Activated CD4-positive, alpha-beta T cell treated with anti-CD3 and anti-CD28 coated beads for 36 hours (primary cell): ENCODE measurements at regions of chr5 and their contacts with region 1.

Region 1: DNA sequence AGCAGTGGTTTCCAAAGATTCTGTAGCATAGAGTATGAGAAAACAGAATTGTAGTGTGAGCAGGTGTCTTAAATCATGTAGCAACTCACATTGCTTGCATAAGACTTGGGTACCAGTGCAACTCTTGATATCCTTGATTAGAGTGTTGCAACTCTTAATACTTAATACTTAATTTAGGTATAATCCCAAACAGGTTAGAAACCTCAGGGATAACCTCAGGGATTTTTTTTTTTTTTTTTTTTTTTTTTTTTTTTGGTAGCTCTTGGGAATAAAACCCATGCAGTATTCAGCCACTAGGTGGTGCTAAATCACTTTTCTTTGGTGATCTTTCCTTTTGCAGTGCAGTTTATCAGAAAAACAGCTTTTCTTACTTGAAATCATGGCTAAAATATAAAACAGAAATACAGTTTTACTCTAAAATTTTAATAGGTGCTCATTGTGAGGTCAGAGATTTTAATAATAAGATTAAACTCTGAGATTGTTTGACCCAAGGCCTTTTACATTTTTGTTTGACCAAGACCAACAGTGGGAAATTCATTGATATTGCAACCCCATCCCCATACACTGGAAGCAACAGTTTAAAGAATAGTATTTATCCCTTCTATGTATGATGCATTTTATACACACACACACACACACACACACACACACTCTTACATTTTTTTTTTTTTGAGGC is 55.3 kb downstream of the ERAP1 start:
- DNase-seq: peak; percentile 36
- ATAC-seq: no peak
- H3K4me3 Mint-ChIP-seq: no peak overlapping the region
- H3K27ac Mint-ChIP-seq: no peak overlapping the region
- H3K4me1 Mint-ChIP-seq: peaks cover 18% of the 10 kb centered on the region
- H3K27me3 Mint-ChIP-seq: no peaks in the 10 kb centered on the region

Region 2: GRCh38 chr5:96344678-96345577 is 407.6 kb before region 1 on chr5:
- CTCF ChIA-PET with region 1: no interaction called
- POLR2A ChIA-PET with region 1: no interaction called
- intact Hi-C with region 1: loop called in 1 of 2 experiments (anchors 10 kb)
- DNase-seq: peak; percentile 12
- ATAC-seq: peak; percentile 89
- H3K4me3 Mint-ChIP-seq: peak overlapping the region; percentile 15
- H3K27ac Mint-ChIP-seq: no peak overlapping the region
- H3K4me1 Mint-ChIP-seq: peaks cover 28% of the 10 kb centered on the region
- H3K27me3 Mint-ChIP-seq: peaks cover 10% of the 10 kb centered on the region

Region 3: DNA sequence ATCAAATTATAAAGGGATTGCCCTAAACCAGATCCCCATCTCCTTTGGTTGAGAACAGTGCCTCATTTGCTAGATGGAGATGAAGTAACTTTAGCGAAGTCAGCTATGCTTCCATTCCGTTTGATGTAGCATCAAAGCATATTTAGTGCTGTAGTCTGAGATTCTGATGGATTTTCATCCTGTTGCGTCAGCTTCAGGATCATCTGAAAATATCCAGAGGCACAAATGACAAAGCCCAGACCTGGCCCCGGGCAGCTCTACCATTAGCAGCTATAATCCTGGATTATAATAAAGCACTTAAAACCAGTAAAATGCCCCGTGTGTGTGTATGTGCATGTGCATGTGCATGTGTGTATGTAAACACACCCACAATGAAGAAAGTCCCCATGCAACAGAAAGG is 10.5 kb after region 1 on chr5:
- CTCF ChIA-PET with region 1: interaction called, 33 read pairs
- POLR2A ChIA-PET with region 1: no interaction called
- intact Hi-C with region 1: no loop called
- DNase-seq: no peak
- ATAC-seq: no peak
- H3K4me3 Mint-ChIP-seq: no peak overlapping the region
- H3K27ac Mint-ChIP-seq: no peak overlapping the region
- H3K4me1 Mint-ChIP-seq: no peaks in the 10 kb centered on the region
- H3K27me3 Mint-ChIP-seq: no peaks in the 10 kb centered on the region

Region 4: DNA sequence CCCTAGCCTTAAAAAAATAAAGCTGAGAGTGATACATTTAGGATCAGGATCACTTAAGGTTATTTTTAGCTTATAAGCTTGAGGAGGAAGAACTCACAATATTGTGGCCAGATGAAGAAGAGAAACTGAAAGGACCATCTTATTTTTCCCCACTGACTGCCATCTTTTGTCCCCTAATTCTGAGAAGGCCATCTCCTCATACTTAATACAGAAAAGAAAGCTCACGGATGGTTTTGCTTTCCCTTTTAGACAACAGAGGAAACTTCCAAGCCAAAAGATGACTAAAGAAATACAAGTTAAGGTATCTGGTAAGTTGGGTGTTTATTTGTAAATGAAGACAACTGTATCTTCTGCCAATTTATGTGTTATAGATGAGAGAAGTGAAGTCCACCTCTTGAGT is 18.9 kb after region 1 on chr5:
- CTCF ChIA-PET with region 1: interaction called, 13 read pairs
- POLR2A ChIA-PET with region 1: no interaction called
- intact Hi-C with region 1: no loop called
- DNase-seq: no peak
- ATAC-seq: peak; percentile 53
- H3K4me3 Mint-ChIP-seq: no peak overlapping the region
- H3K27ac Mint-ChIP-seq: peak overlapping the region; percentile 82
- H3K4me1 Mint-ChIP-seq: peaks cover 10% of the 10 kb centered on the region
- H3K27me3 Mint-ChIP-seq: no peaks in the 10 kb centered on the region

Region 5: DNA sequence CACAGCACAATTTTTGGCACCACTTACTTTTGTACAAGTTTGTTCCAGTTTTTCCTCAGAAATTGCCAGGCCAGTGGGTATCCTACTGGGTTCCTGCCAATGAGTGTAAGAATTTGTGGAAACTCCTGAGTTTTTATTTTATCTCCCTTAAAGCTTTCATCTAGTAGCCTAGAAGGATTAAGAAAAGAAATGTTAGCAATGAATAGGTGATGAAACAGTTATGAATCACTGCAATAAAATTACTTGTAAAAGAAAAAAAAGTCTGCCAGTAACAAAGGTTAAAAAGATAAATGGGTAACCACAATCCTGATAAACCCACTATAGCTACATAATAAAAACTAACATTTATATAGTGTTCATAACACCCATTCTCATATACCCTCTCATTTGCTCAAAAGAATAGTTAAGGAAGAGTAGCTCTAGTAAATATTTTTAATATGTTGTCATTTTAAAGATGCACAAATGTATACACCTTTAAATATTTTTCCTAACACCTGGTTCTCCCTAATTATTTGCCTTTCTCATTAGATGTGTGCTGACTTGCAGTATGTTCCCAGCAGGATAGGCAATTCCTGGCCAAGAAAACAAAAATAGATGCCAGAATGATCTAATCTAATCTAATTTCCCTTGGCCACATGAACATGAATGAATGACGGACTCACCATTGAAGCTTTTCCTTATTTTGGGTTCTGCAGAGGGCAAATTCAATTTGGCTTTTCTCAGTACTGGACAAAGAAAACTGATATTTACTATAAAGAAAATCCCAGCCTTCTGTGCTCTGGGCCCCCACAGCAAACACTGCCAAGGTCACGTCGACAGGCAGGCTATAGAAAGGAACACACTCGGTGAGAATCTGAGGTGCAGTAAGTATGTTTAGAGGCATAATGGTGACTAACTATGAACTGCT is 28.8 kb after region 1 on chr5:
- CTCF ChIA-PET with region 1: interaction called, 10 read pairs
- POLR2A ChIA-PET with region 1: no interaction called
- intact Hi-C with region 1: no loop called
- DNase-seq: no peak
- ATAC-seq: no peak
- H3K4me3 Mint-ChIP-seq: no peak overlapping the region
- H3K27ac Mint-ChIP-seq: peak overlapping the region; percentile 40
- H3K4me1 Mint-ChIP-seq: peaks cover 7% of the 10 kb centered on the region
- H3K27me3 Mint-ChIP-seq: no peaks in the 10 kb centered on the region

Region 6: GRCh38 chr5:97142521-97143254 is 390.2 kb after region 1 on chr5 and contains the start of gene LIX1:
- CTCF ChIA-PET with region 1: interaction called, 9 read pairs
- POLR2A ChIA-PET with region 1: no interaction called
- intact Hi-C with region 1: loop called (anchors 1 kb)
- DNase-seq: peak; percentile 55
- ATAC-seq: peak; percentile 84
- H3K4me3 Mint-ChIP-seq: no peak within 1 kb of the TSS
- H3K27ac Mint-ChIP-seq: no peak within 1 kb of the TSS
- H3K4me1 Mint-ChIP-seq: no peaks in the 10 kb centered on the region
- H3K27me3 Mint-ChIP-seq: peaks cover 3% of the 10 kb centered on the region
- total RNA-seq, gene LIX1: not detected